ENCODE measurements at regions of chr11 and their contacts with region 1.

Region 1: GRCh38 chr11:65078151-65078550 is 5.7 kb downstream of the CDCA5 start:
- DNase-seq: peak; percentile 63 to 76
- H3K4me3 ChIP-seq: no peak overlapping the region
- H3K4me3 Mint-ChIP-seq: no peak overlapping the region
- H3K27ac Mint-ChIP-seq: peak overlapping the region; percentile 32
- H3K4me1 ChIP-seq: peaks cover 6% of the 10 kb centered on the region; the same call in 1 of the 2 replicates
- H3K4me1 Mint-ChIP-seq: peaks cover 18% of the 10 kb centered on the region
- H3K27me3 ChIP-seq: no peaks in the 10 kb centered on the region
- H3K27me3 Mint-ChIP-seq: no peaks in the 10 kb centered on the region
- CTCF ChIP-seq: peak; percentile 61 to 79

Region 2: GRCh38 chr11:65040847-65041621 is 37.1 kb before region 1 on chr11 and contains the start of gene SAC3D1:
- CTCF ChIA-PET with region 1: interaction called, 4 read pairs
- POLR2A ChIA-PET with region 1: no interaction called
- intact Hi-C with region 1: loop called (anchors 5 kb)
- DNase-seq: peak; percentile 97 to 98
- H3K4me3 ChIP-seq: peak within 1 kb of the TSS; percentile 89
- H3K4me3 Mint-ChIP-seq: peak within 1 kb of the TSS; percentile 89
- H3K27ac Mint-ChIP-seq: peak within 1 kb of the TSS; percentile 83
- H3K4me1 ChIP-seq: peaks cover 11% of the 10 kb centered on the region; the same call in 1 of the 2 replicates
- H3K4me1 Mint-ChIP-seq: no peaks in the 10 kb centered on the region
- H3K27me3 ChIP-seq: no peaks in the 10 kb centered on the region
- H3K27me3 Mint-ChIP-seq: no peaks in the 10 kb centered on the region
- CTCF ChIP-seq: no peak
- total RNA-seq, gene SAC3D1: 21.2 and 21.6 TPM in 2 replicates

Measured in Caco-2 (cell line).